Endothelial cell of umbilical vein (primary cell): ENCODE measurements at regions of chr6 and their contacts with region 1.

Region 1: DNA sequence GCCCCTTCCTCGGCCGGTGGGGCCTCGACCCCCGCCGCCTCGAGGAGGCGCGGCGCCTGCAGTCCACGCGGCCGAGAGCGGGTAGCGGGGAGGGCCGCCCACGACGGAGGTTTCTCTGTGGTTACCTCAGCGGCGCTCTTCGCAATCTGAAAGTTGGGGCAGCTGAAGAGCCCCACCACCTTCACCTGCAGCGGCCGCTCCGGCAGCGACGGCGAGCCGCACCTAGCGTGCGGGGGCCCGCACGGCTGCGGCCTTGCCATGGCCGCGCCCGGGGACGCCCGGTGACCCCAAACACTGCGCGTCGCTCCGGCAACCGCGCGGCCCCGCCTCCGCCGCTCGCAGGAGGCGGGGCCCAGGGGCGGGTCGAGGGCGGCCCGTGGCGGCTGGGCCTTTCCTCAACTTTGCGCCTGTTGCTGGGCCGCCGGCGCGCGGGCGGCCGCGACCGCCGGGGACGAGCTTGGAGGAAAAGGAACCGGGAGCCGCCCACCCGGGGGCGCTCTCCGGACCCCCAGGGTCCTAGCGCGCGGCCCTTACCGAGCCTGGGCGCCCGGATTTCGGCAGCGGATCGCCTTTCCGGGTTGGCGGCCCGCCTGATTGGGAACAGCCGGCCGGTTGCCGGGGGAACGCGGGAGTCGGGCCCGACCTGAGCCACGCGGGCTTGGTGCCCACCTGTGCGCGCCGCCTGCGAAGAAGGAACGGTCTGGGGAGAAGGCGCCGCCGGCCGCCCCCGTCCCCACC is at the starts of genes PPIL6 and SMPD2:
- DNase-seq: peak; percentile 86
- H3K4me3 ChIP-seq: peak within 1 kb of the TSS; percentile 62 to 73 (median 66)
- H3K27ac ChIP-seq: peak within 1 kb of the TSS; percentile 59
- H3K4me1 ChIP-seq: peaks cover 3% of the 10 kb centered on the region
- H3K27me3 ChIP-seq: no peaks in the 10 kb centered on the region
- CTCF ChIP-seq: peak in 1 of 2 donors; percentile 41
- POLR2A ChIP-seq: no peak
- total RNA-seq, gene PPIL6: 0.25 and 0.33 TPM in 2 replicates
- total RNA-seq, gene SMPD2: 6.9 and 8.5 TPM in 2 replicates

Region 2: GRCh38 chr6:109349419-109350078 is 91.0 kb before region 1 on chr6:
- CTCF ChIA-PET with region 1: no interaction called
- POLR2A ChIA-PET with region 1: no interaction called
- dilution Hi-C with region 1: no loop called
- intact Hi-C with region 1: no loop called
- DNase-seq: peak; percentile 55
- H3K4me3 ChIP-seq: no peak overlapping the region
- H3K27ac ChIP-seq: no peak overlapping the region
- H3K4me1 ChIP-seq: no peaks in the 10 kb centered on the region
- H3K27me3 ChIP-seq: no peaks in the 10 kb centered on the region
- CTCF ChIP-seq: no peak
- POLR2A ChIP-seq: no peak

Region 3: DNA sequence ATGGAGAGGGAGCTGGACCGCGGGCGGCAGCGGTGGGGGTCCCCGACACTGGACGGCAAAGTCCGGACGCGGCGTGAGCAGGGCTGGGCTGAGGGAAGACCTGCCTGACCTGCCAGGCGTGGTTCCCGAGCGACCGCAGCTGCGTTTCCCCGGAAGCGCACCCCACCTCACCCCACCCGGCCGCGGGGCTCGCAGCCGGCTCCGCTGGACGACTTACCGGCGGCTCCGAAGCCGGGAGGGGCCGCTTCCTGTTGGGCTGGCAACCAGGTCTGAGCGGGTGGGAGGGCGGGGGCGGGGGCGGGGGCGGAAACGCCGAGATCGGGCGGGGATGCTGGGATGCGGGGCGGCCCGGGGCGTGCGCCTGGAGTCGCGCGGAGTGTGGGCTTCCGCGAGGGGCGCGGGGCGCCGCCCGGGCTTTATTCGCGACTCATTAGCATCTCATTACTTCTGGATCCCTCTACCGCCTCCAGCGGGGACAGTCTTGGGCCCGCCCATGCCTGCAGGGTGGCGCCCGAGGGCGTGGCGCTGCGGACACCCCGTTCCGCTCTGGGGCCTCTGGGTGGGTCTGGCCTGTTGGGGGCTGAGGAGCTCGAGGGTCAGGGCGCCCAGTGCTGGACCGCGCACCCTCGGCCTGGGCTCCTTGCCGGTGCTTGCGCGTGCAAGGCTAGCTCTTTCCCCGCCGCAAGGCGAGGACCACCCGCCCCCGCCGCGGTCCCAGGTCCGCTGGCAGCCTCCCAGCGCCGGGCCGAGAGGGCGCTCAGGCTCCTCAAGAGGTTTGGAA is 15.2 kb after region 1 on chr6 and contains the start of gene MICAL1:
- CTCF ChIA-PET with region 1: interaction called, 11 read pairs
- POLR2A ChIA-PET with region 1: no interaction called
- dilution Hi-C with region 1: no loop called
- intact Hi-C with region 1: loop called (anchors 1 kb)
- DNase-seq: peak; percentile 17
- H3K4me3 ChIP-seq: peak within 1 kb of the TSS; percentile 66 to 73 (median 69)
- H3K27ac ChIP-seq: no peak within 1 kb of the TSS
- H3K4me1 ChIP-seq: peaks cover 7% of the 10 kb centered on the region
- H3K27me3 ChIP-seq: no peaks in the 10 kb centered on the region
- CTCF ChIP-seq: peak; percentile 23 to 44
- POLR2A ChIP-seq: peak; percentile 68
- total RNA-seq, gene MICAL1: 36.5 and 38.7 TPM in 2 replicates

Region 4: DNA sequence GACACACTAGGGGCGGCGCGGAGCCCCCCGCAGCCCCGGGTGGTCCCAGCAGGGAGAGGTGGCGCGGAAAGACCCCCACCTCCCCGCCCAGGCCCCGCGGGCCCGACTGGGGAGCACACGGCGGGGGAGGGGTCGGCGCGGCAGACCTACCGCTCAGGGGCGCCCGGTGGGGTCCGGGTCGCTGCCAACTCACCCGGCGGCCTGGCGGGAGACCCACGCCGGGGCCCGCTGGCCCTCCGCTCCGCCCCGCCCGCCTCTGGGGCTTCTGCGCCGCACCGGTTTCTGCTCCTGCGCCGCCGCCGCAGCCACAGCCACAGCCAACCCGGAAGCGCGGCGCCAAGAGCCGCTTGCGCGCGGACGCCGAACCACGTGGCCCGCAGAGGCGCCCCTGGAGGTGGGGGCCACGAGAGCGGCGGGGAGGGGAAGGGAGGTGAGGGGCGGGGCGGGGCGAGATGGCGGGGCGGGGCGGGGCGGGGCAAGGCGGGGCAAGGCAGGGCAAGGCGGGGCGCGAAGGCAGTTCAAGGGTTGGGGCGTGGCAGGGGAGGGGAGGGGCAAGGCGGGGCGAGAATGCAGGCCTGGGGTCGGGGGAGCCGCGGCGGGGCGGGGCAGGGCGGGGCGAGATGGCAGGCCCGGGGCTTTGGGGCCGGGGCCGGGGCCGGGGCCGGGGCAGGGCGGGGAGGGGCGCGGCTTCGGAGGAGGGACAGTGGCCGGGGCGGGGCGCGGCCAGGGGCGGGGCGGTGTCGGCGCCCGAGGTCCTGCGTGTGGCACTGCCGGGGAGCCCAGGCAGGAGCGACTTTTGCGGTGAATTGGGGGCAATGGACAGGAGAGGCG is 42.6 kb after region 1 on chr6 and contains the start of gene ZBTB24:
- CTCF ChIA-PET with region 1: no interaction called
- POLR2A ChIA-PET with region 1: no interaction called
- dilution Hi-C with region 1: no loop called
- intact Hi-C with region 1: loop called (anchors 5 kb)
- DNase-seq: peak; percentile 79
- H3K4me3 ChIP-seq: peak within 1 kb of the TSS; percentile 55 to 95 (median 93)
- H3K27ac ChIP-seq: peak within 1 kb of the TSS; percentile 78
- H3K4me1 ChIP-seq: peaks cover 26% of the 10 kb centered on the region
- H3K27me3 ChIP-seq: peaks cover 8 to 13% of the 10 kb centered on the region in 2 experiments
- CTCF ChIP-seq: no peak
- POLR2A ChIP-seq: peak; percentile 70
- total RNA-seq, gene ZBTB24: 6.2 and 6.4 TPM in 2 replicates

Region 5: GRCh38 chr6:109705258-109705657 is 264.8 kb after region 1 on chr6:
- CTCF ChIA-PET with region 1: no interaction called
- POLR2A ChIA-PET with region 1: no interaction called
- dilution Hi-C with region 1: no loop called
- intact Hi-C with region 1: no loop called
- DNase-seq: peak; percentile 90
- H3K4me3 ChIP-seq: no peak overlapping the region
- H3K27ac ChIP-seq: no peak overlapping the region
- H3K4me1 ChIP-seq: no peaks in the 10 kb centered on the region
- H3K27me3 ChIP-seq: no peaks in the 10 kb centered on the region
- CTCF ChIP-seq: peak; percentile 91 to 99
- POLR2A ChIP-seq: no peak